ENCODE measurements at regions of chr10 and their contacts with region 1.

Region 1: DNA sequence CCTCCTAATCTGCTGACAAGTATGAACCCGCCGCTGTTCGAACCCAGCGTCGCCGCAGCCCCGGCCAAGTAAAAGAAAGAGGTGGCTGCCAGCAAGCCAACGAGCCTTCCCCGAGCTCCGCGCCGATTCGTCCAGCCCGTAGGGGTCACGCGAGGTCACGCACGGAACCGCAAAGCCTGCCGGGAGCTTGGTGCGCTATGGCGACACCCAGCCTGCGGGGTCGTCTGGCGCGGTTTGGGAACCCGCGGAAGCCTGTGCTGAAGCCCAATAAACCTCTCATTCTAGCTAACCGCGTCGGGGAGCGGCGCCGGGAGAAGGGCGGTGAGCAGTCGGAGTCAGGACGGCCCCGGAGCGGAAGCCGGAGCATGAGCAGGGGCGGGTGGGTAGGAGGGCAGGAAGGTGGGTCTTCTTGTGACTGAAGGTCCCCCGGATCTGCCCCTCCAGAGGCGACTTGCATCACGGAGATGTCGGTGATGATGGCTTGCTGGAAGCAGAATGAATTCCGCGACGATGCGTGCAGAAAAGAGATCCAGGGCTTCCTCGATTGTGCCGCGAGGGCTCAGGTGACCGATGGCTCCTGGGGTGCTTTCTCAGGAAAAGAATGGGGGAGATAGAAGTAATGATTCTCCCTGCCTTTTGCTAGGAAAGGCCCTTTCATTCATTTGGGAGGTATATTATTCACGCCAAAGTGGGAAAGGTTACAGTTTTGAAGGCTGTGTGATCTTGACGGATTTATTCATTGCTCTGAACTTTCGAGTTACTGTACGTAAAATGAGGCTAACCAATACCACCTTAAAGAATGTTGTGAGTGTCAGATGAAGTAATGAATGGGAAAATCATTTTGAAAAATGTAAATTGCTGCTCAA is at the start of gene CHCHD1:
- DNase-seq: peak; percentile 96
- ATAC-seq: peak; percentile 73
- H3K4me3 Mint-ChIP-seq: peak within 1 kb of the TSS; percentile 87
- H3K27ac Mint-ChIP-seq: peak within 1 kb of the TSS; percentile 97
- H3K4me1 Mint-ChIP-seq: peaks cover 51% of the 10 kb centered on the region
- H3K27me3 Mint-ChIP-seq: no peaks in the 10 kb centered on the region
- total RNA-seq, gene CHCHD1: 29.0 to 36.2 TPM

Region 2: GRCh38 chr10:73653701-73654335 is 128.3 kb before region 1 on chr10:
- CTCF ChIA-PET with region 1: no interaction called
- DNase-seq: no peak
- ATAC-seq: no peak
- H3K4me3 Mint-ChIP-seq: no peak overlapping the region
- H3K27ac Mint-ChIP-seq: no peak overlapping the region
- H3K4me1 Mint-ChIP-seq: peaks cover 16% of the 10 kb centered on the region
- H3K27me3 Mint-ChIP-seq: no peaks in the 10 kb centered on the region

Region 3: DNA sequence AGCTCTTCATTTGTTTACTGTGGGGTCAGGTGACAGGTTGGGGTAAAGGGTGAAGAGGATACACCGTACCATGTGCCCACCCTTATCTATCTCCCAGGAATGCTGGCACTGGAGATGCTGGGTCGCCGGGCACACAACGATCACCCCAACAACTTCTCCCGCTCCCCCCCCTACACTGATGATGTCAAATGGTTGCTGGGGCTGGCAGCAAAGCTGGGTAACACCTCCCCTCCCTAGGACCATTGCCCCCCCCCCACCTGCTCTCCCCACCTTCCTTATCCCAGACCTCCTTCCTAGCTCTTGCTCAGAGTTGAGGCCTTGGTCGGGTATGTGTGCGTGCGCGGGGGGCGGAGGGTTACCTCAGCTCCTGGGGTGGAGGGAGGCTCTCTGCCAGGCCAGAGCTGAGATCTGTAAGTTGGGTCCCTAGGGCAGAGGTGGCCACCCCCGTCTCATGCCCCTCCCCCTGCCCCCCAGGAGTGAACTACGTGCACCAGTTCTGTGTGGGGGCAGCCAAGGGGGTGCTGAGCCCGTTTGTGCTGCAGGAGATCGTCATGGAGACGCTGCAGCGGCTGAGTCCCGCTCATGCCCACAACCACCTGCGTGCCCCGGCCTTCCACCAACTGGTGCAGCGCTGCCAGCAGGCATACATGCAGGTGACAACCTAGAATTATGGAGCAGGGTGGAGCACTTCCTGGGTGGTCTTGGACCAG is 18.6 kb after region 1 on chr10:
- CTCF ChIA-PET with region 1: no interaction called
- DNase-seq: no peak
- ATAC-seq: no peak
- H3K4me3 Mint-ChIP-seq: no peak overlapping the region
- H3K27ac Mint-ChIP-seq: no peak overlapping the region
- H3K4me1 Mint-ChIP-seq: peaks cover 11% of the 10 kb centered on the region
- H3K27me3 Mint-ChIP-seq: no peaks in the 10 kb centered on the region

Region 4: GRCh38 chr10:73810735-73811465 is 28.8 kb after region 1 on chr10:
- CTCF ChIA-PET with region 1: interaction called, 10 read pairs
- DNase-seq: peak; percentile 74
- ATAC-seq: peak; percentile 34
- H3K4me3 Mint-ChIP-seq: peak overlapping the region; percentile 87
- H3K27ac Mint-ChIP-seq: peak overlapping the region; percentile 91
- H3K4me1 Mint-ChIP-seq: peaks cover 44% of the 10 kb centered on the region
- H3K27me3 Mint-ChIP-seq: no peaks in the 10 kb centered on the region

Region 5: DNA sequence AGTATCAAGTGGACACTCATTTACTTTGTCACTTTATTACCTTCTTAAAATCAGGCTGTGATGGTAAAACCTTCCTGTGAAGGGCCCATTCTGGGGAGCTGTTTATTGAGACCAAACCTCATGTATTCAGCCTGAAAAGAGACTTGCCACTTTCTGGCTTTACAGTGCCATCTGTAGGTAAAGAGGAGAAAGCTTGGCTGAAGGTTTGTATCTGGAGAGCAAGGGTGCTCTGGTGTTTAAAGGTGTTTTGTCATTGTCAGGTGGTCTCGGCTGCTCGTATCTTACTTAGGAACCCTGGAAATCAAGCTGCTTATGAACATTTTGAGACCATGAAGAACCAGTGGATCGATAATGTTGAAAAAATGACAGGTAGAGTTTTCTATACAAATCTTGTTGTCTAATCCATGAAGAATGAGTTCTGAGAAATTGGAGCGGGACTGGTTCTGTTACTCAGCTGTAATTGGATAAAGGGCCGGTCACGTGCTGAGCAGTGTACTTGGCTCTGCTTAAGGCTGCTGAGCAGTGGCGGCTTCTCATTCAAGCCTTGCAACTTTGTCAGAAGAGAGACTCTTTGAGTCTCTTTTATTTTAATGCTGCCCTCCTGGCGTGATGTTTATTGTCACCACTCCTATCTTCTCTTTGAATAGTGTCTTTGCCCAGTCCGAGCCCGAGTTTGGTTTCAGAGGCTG is 321.6 kb after region 1 on chr10:
- CTCF ChIA-PET with region 1: no interaction called
- DNase-seq: no peak
- ATAC-seq: peak; percentile 42
- H3K4me3 Mint-ChIP-seq: no peak overlapping the region
- H3K27ac Mint-ChIP-seq: no peak overlapping the region
- H3K4me1 Mint-ChIP-seq: peaks cover 3% of the 10 kb centered on the region
- H3K27me3 Mint-ChIP-seq: no peaks in the 10 kb centered on the region

Region 6: DNA sequence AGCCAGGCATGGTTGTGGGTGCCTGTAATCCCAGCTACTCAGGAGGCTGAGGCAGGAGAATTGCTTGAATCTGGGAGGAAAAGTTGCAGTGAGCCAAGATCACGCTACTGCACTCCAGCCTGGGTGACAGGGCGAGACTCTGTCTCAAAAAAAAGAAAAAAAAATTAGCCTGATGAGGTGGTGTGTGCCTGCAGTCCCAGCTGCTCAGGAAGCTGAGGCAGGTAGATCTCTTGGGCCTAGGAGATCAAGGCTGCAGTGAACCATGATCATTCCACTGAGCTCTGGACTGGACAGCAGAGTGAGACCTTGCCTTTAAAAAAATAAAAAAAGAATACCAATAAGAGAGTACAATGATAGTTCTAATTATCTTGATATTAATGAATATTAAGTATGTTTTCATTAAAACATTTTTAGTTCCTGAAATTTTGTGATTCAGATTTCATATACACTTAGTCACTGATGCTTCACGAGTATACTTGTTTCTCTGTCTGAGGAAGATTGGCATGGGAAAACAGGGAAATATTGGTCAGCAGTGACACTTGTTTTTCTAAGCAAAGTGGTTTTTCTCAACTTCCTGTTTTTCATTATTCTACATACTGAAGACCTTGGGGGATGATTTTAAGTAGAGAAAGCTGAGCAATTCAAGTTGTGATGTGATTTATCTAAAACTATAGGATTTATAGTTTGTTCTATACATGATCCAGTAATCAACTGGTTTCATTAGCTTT is 445.7 kb after region 1 on chr10:
- CTCF ChIA-PET with region 1: no interaction called
- DNase-seq: no peak
- ATAC-seq: peak; percentile 63
- H3K4me3 Mint-ChIP-seq: no peak overlapping the region
- H3K27ac Mint-ChIP-seq: peak overlapping the region; percentile 86
- H3K4me1 Mint-ChIP-seq: peaks cover 27% of the 10 kb centered on the region
- H3K27me3 Mint-ChIP-seq: no peaks in the 10 kb centered on the region

Measured in activated CD8-positive, alpha-beta memory T cell treated with anti-CD3 and anti-CD28 coated beads, Interleukin-2, amount 10 ng/mL, durations not matched to agents 7 days and 5 days (primary cell).